AG04450 (cell line): ENCODE measurements at regions of chr2 and their contacts with region 1.

Region 1: GRCh38 chr2:119753041-119753929 is 6.4 kb upstream of the PTPN4 start:
- DNase-seq: no peak
- H3K4me3 ChIP-seq: no peak overlapping the region
- H3K27ac ChIP-seq: no peak overlapping the region
- H3K27me3 ChIP-seq: no peaks in the 10 kb centered on the region
- CTCF ChIP-seq: peak; percentile 66

Region 2: GRCh38 chr2:119713804-119714490 is 39.3 kb before region 1 on chr2:
- CTCF ChIA-PET with region 1: no interaction called
- POLR2A ChIA-PET with region 1: no interaction called
- DNase-seq: no peak
- H3K4me3 ChIP-seq: no peak overlapping the region
- H3K27ac ChIP-seq: no peak overlapping the region
- H3K27me3 ChIP-seq: peaks cover 28% of the 10 kb centered on the region
- CTCF ChIP-seq: no peak

Region 3: GRCh38 chr2:119768740-119769139 is 15.5 kb after region 1 on chr2:
- CTCF ChIA-PET with region 1: interaction called, 14 read pairs
- POLR2A ChIA-PET with region 1: no interaction called
- DNase-seq: no peak
- H3K4me3 ChIP-seq: no peak overlapping the region
- H3K27ac ChIP-seq: no peak overlapping the region
- H3K27me3 ChIP-seq: no peaks in the 10 kb centered on the region
- CTCF ChIP-seq: no peak